ENCODE measurements at regions of chr3 and their contacts with region 1.

Region 1: DNA sequence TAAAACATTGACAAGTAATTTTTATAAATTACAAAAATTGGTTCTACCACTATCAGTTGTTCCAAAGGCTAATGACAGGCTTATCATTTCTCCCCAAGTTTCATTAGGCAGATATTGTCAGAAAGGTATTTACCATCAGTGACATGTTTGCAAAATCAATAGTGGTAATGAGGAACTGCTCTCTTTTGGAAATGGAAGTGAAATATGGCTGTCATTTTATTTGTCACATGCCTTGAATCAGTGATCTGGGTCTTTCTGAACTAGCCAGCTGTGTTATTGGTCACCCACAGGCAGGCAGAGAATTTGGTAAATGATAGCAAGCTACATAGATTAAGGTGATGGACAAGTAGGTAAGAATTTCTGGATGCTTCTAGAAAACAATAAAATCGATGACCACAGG is 268.0 kb upstream of the ARHGEF26 start:
- DNase-seq: no peak
- ATAC-seq: no peak
- H3K4me3 ChIP-seq: no peak overlapping the region
- H3K4me3 Mint-ChIP-seq: no peak overlapping the region
- H3K27ac ChIP-seq: no peak overlapping the region
- H3K27ac Mint-ChIP-seq: no peak overlapping the region
- H3K4me1 ChIP-seq: no peaks in the 10 kb centered on the region
- H3K4me1 Mint-ChIP-seq: no peaks in the 10 kb centered on the region
- H3K27me3 ChIP-seq: no peaks in the 10 kb centered on the region
- H3K27me3 Mint-ChIP-seq: peaks cover 4% of the 10 kb centered on the region
- CTCF ChIP-seq: no peak

Region 2: GRCh38 chr3:152676810-152677379 is 1176.3 kb before region 1 on chr3:
- CTCF ChIA-PET with region 1: no interaction called
- POLR2A ChIA-PET with region 1: no interaction called
- intact Hi-C with region 1: loop called in 1 of 2 experiments (anchors 5 kb)
- DNase-seq: no peak
- ATAC-seq: no peak
- H3K4me3 ChIP-seq: no peak overlapping the region
- H3K4me3 Mint-ChIP-seq: no peak overlapping the region
- H3K27ac ChIP-seq: no peak overlapping the region
- H3K27ac Mint-ChIP-seq: no peak overlapping the region
- H3K4me1 ChIP-seq: no peaks in the 10 kb centered on the region
- H3K4me1 Mint-ChIP-seq: no peaks in the 10 kb centered on the region
- H3K27me3 ChIP-seq: no peaks in the 10 kb centered on the region
- H3K27me3 Mint-ChIP-seq: no peaks in the 10 kb centered on the region
- CTCF ChIP-seq: no peak

Region 3: DNA sequence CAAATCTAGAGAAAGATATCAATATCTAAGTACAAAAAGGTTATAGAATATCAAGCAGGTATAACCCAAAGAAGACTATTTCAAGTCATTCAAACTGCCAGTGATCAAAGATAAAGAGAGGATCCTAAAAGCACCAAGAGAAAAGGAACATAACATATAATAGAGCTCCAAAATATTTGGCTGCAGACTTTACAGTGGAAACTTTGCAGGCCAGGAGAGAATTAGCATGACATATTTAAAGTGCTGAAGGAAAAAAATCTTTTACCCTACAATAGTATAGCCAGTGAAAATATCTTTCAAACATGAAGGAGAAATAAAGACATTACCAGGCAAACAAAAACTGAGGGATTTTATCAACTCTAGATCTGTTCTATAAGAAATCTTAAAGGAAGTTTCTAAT is 13.7 kb after region 1 on chr3:
- CTCF ChIA-PET with region 1: no interaction called
- POLR2A ChIA-PET with region 1: no interaction called
- intact Hi-C with region 1: no loop called
- DNase-seq: no peak
- ATAC-seq: no peak
- H3K4me3 ChIP-seq: no peak overlapping the region
- H3K4me3 Mint-ChIP-seq: no peak overlapping the region
- H3K27ac ChIP-seq: no peak overlapping the region
- H3K27ac Mint-ChIP-seq: no peak overlapping the region
- H3K4me1 ChIP-seq: no peaks in the 10 kb centered on the region
- H3K4me1 Mint-ChIP-seq: no peaks in the 10 kb centered on the region
- H3K27me3 ChIP-seq: no peaks in the 10 kb centered on the region
- H3K27me3 Mint-ChIP-seq: peaks cover 6% of the 10 kb centered on the region
- CTCF ChIP-seq: no peak